Activated B cell treated with CpG ODN at 0.5 μM for 24 hours (primary cell): ENCODE measurements at regions of chr6 and their contacts with region 1.

Region 1: GRCh38 chr6:158559895-158560835 is at the start of gene TMEM181:
- DNase-seq: peak; percentile 83
- ATAC-seq: peak; percentile 89
- H3K4me3 Mint-ChIP-seq: peak within 1 kb of the TSS; percentile 91
- H3K27ac Mint-ChIP-seq: peak within 1 kb of the TSS; percentile 80
- H3K4me1 Mint-ChIP-seq: peaks cover 26% of the 10 kb centered on the region
- H3K27me3 Mint-ChIP-seq: no peaks in the 10 kb centered on the region
- CTCF ChIP-seq: no peak
- total RNA-seq, gene TMEM181: 7.1 and 8.8 TPM in 2 replicates

Region 2: DNA sequence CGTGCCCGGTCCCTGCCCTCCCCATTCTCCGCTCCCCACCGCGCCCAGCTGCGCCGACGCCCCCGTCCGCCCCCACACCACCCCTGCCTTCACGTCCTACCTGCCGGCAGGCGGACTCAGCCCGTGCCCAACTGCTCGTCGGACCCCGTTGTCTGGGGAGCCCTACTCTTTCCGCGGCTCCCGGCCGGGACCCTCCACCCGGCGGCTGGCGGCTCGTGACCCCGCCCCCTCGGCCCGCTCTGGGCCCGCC is 392.2 kb before region 1 on chr6 and contains the start of gene SERAC1:
- CTCF ChIA-PET with region 1: no interaction called
- POLR2A ChIA-PET with region 1: no interaction called
- intact Hi-C with region 1: loop called (anchors 2 kb)
- DNase-seq: no peak
- ATAC-seq: peak; percentile 53
- H3K4me3 Mint-ChIP-seq: peak within 1 kb of the TSS; percentile 95
- H3K27ac Mint-ChIP-seq: peak within 1 kb of the TSS; percentile 99
- H3K4me1 Mint-ChIP-seq: peaks cover 14% of the 10 kb centered on the region
- H3K27me3 Mint-ChIP-seq: no peaks in the 10 kb centered on the region
- CTCF ChIP-seq: no peak
- total RNA-seq, gene SERAC1: 3.0 TPM in 2 replicates

Region 3: DNA sequence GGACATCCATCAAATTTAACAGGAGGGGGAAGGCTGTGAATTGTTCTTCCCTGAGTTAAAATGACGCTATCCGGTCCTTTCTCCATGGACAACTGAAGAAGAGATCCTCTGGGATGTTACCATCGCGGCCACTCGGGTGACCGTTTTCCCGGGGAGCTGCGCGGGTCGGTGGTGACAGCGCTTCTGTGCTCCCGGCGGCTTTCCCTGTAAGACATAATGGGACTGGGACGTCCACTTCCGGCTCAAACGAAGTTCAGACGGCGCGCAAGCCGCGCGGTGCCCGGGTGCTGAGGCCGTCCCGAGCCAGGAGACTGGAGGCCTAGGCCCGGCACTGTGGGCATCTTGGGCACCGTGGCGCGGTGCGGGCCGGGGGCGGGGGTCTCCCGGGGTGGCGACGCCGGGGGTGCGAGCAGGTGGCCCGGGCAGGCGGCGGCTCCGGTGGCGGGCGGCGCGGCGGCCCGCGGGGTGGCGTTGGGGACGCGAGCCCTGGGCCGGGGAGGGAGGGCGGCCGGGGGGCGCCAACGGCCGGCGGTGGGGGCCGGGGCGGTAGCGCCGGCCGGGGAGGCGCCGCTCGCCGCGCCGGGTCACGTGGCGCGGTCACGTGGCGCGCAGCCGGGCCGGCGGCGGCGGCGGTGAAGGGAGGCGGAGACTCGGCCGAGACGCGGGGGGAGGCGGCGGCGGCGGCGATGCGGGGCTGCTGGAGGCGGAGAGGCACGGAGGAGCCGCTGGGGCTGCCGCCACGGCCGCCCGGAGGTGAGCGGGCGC is 328.4 kb before region 1 on chr6:
- CTCF ChIA-PET with region 1: interaction called, 3 read pairs
- POLR2A ChIA-PET with region 1: no interaction called
- intact Hi-C with region 1: loop called (anchors 2 kb)
- DNase-seq: peak; percentile 79
- ATAC-seq: peak; percentile 76
- H3K4me3 Mint-ChIP-seq: peak overlapping the region; percentile 92
- H3K27ac Mint-ChIP-seq: peak overlapping the region; percentile 87
- H3K4me1 Mint-ChIP-seq: peaks cover 34% of the 10 kb centered on the region
- H3K27me3 Mint-ChIP-seq: no peaks in the 10 kb centered on the region
- CTCF ChIP-seq: no peak

Region 4: DNA sequence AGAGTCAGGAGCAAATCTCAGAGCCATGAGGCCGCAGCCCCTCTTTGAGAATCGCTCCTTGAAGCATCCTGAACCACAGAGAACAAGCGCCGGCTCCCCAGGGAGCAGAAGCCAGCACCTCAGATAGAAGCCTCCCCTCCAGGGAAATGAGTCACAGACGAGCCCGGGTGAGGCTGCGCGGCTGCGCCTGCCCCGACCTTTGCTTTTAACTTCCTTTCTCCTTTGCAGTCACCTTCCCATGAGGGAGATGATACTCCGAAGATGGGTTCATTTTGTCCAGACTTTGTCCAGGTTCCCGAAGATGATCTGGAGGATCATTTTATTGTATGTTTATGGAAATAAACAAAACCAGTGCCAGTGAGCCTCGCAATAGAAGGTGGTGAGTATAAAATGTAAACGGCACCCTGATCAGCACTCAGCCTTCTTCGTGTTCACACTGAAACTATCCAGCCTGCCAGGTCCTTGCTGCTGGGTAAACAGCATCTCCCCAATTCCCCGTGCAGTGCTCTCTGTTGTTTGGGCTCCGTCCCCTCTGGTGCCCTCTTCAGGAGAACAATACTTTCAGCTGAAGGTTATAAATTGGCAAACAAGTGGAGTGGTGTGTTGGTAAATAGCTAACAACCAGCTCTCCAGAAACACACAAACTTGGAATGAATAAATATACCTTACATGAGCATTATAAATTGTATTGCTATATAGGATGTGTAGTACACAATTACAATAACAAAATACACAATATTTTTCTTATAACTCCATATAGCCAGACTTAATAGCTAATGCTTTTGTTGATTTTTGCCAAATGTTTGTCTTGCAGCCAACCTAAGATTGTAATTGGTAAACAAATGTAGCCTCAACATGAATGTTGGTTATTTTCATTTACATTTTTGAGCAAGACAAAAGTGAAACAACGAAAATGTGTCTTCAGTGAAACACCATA is 41.7 kb before region 1 on chr6:
- CTCF ChIA-PET with region 1: no interaction called
- POLR2A ChIA-PET with region 1: no interaction called
- intact Hi-C with region 1: loop called (anchors 1 kb)
- DNase-seq: peak; percentile 48
- ATAC-seq: peak; percentile 96
- H3K4me3 Mint-ChIP-seq: peak overlapping the region; percentile 81
- H3K27ac Mint-ChIP-seq: no peak overlapping the region
- H3K4me1 Mint-ChIP-seq: peaks cover 12% of the 10 kb centered on the region
- H3K27me3 Mint-ChIP-seq: peaks cover 40% of the 10 kb centered on the region
- CTCF ChIP-seq: no peak

Region 5: GRCh38 chr6:158536084-158536890 is 23.9 kb before region 1 on chr6:
- CTCF ChIA-PET with region 1: no interaction called
- POLR2A ChIA-PET with region 1: no interaction called
- intact Hi-C with region 1: loop called (anchors 1 kb)
- DNase-seq: peak; percentile 66
- ATAC-seq: peak; percentile 58
- H3K4me3 Mint-ChIP-seq: peak overlapping the region; percentile 66
- H3K27ac Mint-ChIP-seq: no peak overlapping the region
- H3K4me1 Mint-ChIP-seq: peaks cover 3% of the 10 kb centered on the region
- H3K27me3 Mint-ChIP-seq: peaks cover 51% of the 10 kb centered on the region
- CTCF ChIP-seq: no peak

Region 6: DNA sequence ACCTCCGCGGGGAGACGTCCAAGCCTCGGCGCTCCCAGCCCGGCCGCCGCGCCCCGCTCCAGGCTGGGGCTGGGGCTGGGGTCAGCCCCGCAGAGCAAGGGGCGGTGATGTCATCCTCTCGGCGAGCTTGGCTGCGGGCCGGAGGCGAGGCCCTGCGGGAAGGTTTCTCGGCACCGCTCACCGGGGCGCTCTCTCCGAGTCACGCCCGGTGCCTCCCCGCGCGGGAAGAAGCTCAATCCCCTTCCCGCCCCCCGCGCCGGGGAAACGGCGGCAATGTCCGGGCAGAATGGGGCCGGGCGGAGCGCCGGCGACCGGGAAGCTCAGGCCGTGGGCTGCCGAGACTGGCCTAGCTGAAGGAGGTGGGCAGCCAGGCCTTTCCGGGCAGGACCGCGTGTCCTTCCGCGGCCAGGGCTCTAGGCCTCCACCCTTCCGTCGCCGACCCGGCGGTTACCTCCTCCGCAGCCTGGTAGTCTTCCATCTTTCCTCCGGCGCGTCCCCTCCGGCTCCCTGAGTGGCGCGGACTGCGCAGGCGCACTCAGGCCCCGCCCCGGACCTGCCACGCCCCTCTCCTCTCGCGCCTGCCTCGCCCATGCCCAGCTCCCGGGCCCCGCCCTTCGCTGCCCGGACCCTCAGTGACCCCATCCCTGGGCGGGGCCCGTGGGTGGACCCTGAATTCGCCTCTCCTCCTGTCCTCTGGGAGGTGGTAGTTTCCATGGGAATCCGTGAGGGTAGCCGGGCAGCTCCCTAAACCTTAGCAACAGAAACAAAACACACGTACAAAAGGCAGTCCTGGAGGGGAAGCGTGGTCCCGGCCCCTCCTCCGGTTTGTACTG is 84.3 kb after region 1 on chr6 and contains the start of gene DYNLT1:
- CTCF ChIA-PET with region 1: no interaction called
- POLR2A ChIA-PET with region 1: interaction called, 3 read pairs
- intact Hi-C with region 1: loop called (anchors 1 kb)
- DNase-seq: peak; percentile 97
- ATAC-seq: peak; percentile 68
- H3K4me3 Mint-ChIP-seq: peak within 1 kb of the TSS; percentile 95
- H3K27ac Mint-ChIP-seq: peak within 1 kb of the TSS; percentile 85
- H3K4me1 Mint-ChIP-seq: peaks cover 52% of the 10 kb centered on the region
- H3K27me3 Mint-ChIP-seq: no peaks in the 10 kb centered on the region
- CTCF ChIP-seq: no peak
- total RNA-seq, gene DYNLT1: 37.7 and 43.9 TPM in 2 replicates